Activated T-helper 2 cell treated with anti-CD3 and anti-CD28 coated beads, Interferon-gamma antibody, Interleukin-2, Interleukin-4, amounts not matched to agents 10 μg/mL and 5 μg/mL and 100 μg/mL, durations not matched to agents 14 hours and 24 hours and 36 hours (primary cell): ENCODE measurements at regions of chr7 and their contacts with region 1.

Region 1: GRCh38 chr7:47945261-47946001 is 2.8 kb downstream of the PKD1L1 start:
- DNase-seq: peak; percentile 52
- H3K4me3 Mint-ChIP-seq: no peak overlapping the region
- H3K27ac Mint-ChIP-seq: no peak overlapping the region
- H3K4me1 Mint-ChIP-seq: peaks cover 11% of the 10 kb centered on the region
- H3K27me3 Mint-ChIP-seq: no peaks in the 10 kb centered on the region

Region 2: GRCh38 chr7:47670729-47671128 is 274.7 kb before region 1 on chr7:
- intact Hi-C with region 1: no loop called
- DNase-seq: no peak
- H3K4me3 Mint-ChIP-seq: no peak overlapping the region
- H3K27ac Mint-ChIP-seq: no peak overlapping the region
- H3K4me1 Mint-ChIP-seq: no peaks in the 10 kb centered on the region
- H3K27me3 Mint-ChIP-seq: no peaks in the 10 kb centered on the region

Region 3: DNA sequence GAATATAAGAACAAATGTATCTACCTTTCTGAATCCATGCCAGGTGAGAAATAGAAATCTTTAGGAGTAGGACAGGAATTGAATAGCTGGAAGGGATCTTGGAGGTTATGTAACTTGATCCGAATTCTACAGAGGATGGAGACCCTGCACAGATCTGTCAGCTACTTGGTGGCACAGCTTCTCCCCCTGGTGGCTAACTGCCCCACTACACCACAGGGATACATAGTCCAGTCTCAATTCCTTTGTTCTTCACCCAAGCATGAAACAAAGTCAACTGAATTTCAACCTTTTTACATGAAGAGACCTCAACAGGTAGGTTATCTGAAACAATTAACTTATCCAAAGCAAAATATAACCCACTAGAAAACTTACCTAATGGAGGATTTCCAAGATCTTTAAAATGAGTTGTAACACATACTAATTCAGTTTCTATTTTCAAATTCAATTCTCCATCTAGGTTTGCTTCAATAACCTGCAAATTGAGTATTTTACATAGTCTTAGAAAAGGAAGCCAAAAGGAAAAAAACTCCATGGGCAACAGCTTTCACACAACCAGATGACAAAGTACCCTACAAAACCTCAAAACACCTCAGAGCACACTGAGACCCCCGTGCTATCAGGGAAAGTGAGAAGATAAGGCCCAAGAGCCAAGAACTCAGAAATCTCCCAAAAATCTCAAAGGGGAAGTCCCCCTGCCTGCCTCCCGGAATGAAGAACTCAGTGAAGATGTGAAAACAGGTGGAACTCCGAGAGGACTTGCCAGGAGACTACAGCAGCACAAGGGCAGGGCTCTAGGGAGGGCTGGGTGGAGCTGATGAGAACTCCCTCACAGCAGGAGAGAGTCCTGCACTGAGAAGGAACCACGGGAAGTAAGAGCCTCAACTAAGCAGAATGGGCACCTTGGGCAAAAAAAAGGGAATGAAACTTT is 23.7 kb after region 1 on chr7:
- intact Hi-C with region 1: loop called (anchors 1 kb)
- DNase-seq: no peak
- H3K4me3 Mint-ChIP-seq: no peak overlapping the region
- H3K27ac Mint-ChIP-seq: no peak overlapping the region
- H3K4me1 Mint-ChIP-seq: peaks cover 17% of the 10 kb centered on the region
- H3K27me3 Mint-ChIP-seq: no peaks in the 10 kb centered on the region

Region 4: GRCh38 chr7:48109848-48110663 is 164.6 kb after region 1 on chr7:
- intact Hi-C with region 1: loop called (anchors 1 kb)
- DNase-seq: peak; percentile 75
- H3K4me3 Mint-ChIP-seq: no peak overlapping the region
- H3K27ac Mint-ChIP-seq: no peak overlapping the region
- H3K4me1 Mint-ChIP-seq: peaks cover 9% of the 10 kb centered on the region
- H3K27me3 Mint-ChIP-seq: no peaks in the 10 kb centered on the region

Region 5: DNA sequence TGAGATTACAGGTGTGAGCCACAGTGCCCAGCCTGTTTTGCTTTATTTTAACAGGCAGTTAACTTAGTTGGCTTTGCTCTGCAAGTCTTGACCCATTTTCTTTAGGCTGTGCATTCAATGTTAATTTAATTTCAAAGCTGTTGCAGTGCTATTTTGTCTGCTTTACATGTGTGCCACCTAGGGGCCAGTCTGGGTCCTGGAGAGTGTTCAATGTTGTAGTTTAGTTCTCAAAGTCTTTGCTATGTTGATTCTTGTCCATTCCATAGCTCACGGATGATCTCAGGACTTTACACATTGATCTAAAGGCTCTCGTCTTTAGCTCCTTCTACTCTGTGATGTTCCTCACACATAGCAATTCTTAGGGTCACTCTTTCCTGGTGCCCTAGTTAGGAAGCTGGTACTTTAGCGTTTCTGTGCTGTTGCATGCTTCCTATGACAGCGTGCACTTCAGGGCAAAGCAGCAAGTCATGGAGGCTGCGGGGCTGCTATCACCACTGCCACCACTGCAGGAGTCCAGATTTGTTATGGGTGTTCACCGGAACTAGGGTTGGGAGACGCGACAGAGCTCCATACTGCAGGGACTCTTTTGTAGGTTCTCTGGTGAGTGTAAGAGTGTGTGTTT is 209.5 kb after region 1 on chr7:
- intact Hi-C with region 1: loop called (anchors 1 kb)
- DNase-seq: peak; percentile 18
- H3K4me3 Mint-ChIP-seq: no peak overlapping the region
- H3K27ac Mint-ChIP-seq: no peak overlapping the region
- H3K4me1 Mint-ChIP-seq: no peaks in the 10 kb centered on the region
- H3K27me3 Mint-ChIP-seq: peaks cover 35% of the 10 kb centered on the region